CD8-positive, alpha-beta T cell (primary cell): ENCODE measurements at regions of chr11 and their contacts with region 1.

Region 1: DNA sequence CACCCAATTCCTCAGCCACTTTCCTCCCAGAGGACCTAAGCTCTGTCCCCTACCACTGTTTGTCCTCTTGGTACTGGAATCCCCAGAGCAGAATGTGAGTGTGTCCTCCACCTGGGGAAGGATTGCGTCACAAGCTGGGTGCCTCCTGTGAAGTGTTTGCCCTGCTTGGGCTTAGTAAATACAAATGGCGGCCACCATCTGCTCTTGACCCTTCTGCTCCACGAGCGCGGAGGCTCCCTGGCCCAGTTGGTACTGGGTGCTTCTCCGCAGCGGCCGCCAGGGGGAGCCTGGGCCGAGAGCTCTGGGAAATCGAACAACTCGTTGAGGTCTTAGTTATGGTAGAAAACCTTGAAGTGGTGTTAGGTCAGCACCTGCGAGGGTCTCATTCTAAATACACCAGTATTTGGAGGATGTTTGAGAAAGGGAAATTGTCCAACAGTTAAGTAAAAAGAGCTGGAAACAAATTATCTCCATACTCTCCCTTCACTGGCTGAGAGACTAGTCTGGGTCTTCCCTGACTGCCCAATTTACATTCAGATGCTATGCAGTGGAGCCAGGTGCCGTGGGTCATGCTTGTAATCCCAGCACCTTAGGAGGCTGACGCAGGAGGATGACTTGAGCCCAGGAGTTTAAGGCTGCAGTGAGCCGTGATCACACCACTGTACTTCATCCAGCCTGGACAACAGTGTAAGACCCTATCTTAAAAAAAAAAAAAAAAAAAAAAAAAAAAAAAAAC is 74.6 kb upstream of the TEAD1 start:
- DNase-seq: peak; percentile 1 to 56 (median 25)
- ATAC-seq: no peak
- H3K4me3 ChIP-seq: no peak overlapping the region
- H3K4me3 Mint-ChIP-seq: no peak overlapping the region
- H3K27ac ChIP-seq: no peak overlapping the region
- H3K27ac Mint-ChIP-seq: no peak overlapping the region
- H3K4me1 ChIP-seq: peaks cover 18% of the 10 kb centered on the region
- H3K4me1 Mint-ChIP-seq: peaks cover 15% of the 10 kb centered on the region
- H3K27me3 ChIP-seq: peaks cover 0 to 4% of the 10 kb centered on the region in 2 experiments
- H3K27me3 Mint-ChIP-seq: peaks cover 36% of the 10 kb centered on the region
- CTCF ChIP-seq: peak; percentile 39

Region 2: GRCh38 chr11:12411806-12412727 is 187.5 kb before region 1 on chr11:
- CTCF ChIA-PET with region 1: no interaction called
- POLR2A ChIA-PET with region 1: no interaction called
- intact Hi-C with region 1: no loop called
- DNase-seq: peak in 5 of 9 experiments; percentile 13 to 39 (median 21)
- ATAC-seq: no peak
- H3K4me3 ChIP-seq: no peak overlapping the region
- H3K4me3 Mint-ChIP-seq: no peak overlapping the region
- H3K27ac ChIP-seq: no peak overlapping the region
- H3K27ac Mint-ChIP-seq: no peak overlapping the region
- H3K4me1 ChIP-seq: no peaks in the 10 kb centered on the region
- H3K4me1 Mint-ChIP-seq: no peaks in the 10 kb centered on the region
- H3K27me3 ChIP-seq: no peaks in the 10 kb centered on the region
- H3K27me3 Mint-ChIP-seq: peaks cover 6% of the 10 kb centered on the region
- CTCF ChIP-seq: peak; percentile 32

Region 3: GRCh38 chr11:12900496-12900895 is 300.9 kb after region 1 on chr11:
- CTCF ChIA-PET with region 1: no interaction called
- POLR2A ChIA-PET with region 1: no interaction called
- intact Hi-C with region 1: loop called in 1 of 2 experiments (anchors 5 kb)
- DNase-seq: no peak
- ATAC-seq: no peak
- H3K4me3 ChIP-seq: no peak overlapping the region
- H3K4me3 Mint-ChIP-seq: no peak overlapping the region
- H3K27ac ChIP-seq: no peak overlapping the region
- H3K27ac Mint-ChIP-seq: no peak overlapping the region
- H3K4me1 ChIP-seq: no peaks in the 10 kb centered on the region
- H3K4me1 Mint-ChIP-seq: no peaks in the 10 kb centered on the region
- H3K27me3 ChIP-seq: no peaks in the 10 kb centered on the region
- H3K27me3 Mint-ChIP-seq: peaks cover 19% of the 10 kb centered on the region
- CTCF ChIP-seq: no peak